ENCODE measurements at regions of chr5 and their contacts with region 1.

Region 1: GRCh38 chr5:39376293-39376714 is 12.0 kb upstream of the C9 start:
- DNase-seq: peak; percentile 94
- ATAC-seq: peak; percentile 77
- H3K4me3 ChIP-seq: no peak overlapping the region
- H3K27ac ChIP-seq: no peak overlapping the region
- H3K4me1 ChIP-seq: no peaks in the 10 kb centered on the region
- H3K27me3 ChIP-seq: no peaks in the 10 kb centered on the region
- CTCF ChIP-seq: peak; percentile 98

Region 2: DNA sequence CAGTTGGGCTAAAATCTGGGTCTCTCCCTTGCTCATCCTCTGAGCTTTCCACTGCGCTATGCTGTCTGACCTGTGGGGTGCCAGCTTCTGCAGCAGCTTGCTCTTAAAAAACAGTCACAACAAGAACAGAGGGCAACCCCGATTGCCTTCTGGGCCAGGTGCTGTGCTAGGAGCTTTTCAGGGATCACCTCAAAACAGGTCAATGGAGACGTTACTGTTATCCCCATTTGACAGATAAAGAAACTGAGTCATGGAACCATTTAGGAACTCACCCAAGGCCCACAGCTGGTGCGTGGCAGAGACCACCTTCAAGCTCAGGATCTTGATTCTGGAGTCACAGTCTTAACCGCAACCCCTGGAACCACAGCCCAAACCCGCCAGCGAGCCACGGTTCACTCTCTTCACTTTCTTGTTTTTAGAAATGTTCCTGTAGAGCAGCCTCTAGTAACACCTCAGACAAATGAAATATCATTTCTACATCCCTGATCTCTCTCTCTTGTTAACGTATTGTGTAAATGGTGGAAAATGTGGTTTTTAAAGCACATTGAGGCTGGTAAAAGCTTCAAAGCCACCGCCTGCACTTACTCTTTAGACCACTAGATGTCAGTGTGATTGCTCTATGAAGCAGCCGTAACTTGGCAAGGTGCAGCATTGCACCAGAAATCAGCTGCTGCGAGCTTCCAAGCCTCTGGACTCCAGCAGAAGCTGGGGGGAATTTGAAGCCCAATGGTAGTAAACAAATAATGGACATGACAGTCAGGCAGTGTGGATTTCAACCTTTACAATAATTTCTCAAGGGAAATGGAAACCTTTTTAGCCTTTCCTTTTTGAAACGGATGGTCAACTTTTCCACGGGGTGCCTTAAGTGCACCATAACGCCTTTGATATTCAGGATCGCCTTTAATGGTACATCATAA is 158.7 kb before region 1 on chr5:
- CTCF ChIA-PET with region 1: interaction called, 11 read pairs
- POLR2A ChIA-PET with region 1: no interaction called
- intact Hi-C with region 1: loop called (anchors 5 kb)
- DNase-seq: peak; percentile 95
- ATAC-seq: peak; percentile 39; the same call in 1 of the 2 replicates
- H3K4me3 ChIP-seq: no peak overlapping the region
- H3K27ac ChIP-seq: no peak overlapping the region
- H3K4me1 ChIP-seq: peaks cover 25% of the 10 kb centered on the region
- H3K27me3 ChIP-seq: no peaks in the 10 kb centered on the region
- CTCF ChIP-seq: peak; percentile 99

Region 3: GRCh38 chr5:39501397-39501796 is 125.1 kb after region 1 on chr5:
- CTCF ChIA-PET with region 1: interaction called, 12 read pairs
- POLR2A ChIA-PET with region 1: no interaction called
- intact Hi-C with region 1: no loop called
- DNase-seq: peak; percentile 81
- ATAC-seq: peak; percentile 92
- H3K4me3 ChIP-seq: peak overlapping the region; percentile 43; the same call in 1 of the 2 replicates
- H3K27ac ChIP-seq: peak overlapping the region; percentile 79
- H3K4me1 ChIP-seq: peaks cover 32% of the 10 kb centered on the region
- H3K27me3 ChIP-seq: no peaks in the 10 kb centered on the region
- CTCF ChIP-seq: no peak

Region 4: DNA sequence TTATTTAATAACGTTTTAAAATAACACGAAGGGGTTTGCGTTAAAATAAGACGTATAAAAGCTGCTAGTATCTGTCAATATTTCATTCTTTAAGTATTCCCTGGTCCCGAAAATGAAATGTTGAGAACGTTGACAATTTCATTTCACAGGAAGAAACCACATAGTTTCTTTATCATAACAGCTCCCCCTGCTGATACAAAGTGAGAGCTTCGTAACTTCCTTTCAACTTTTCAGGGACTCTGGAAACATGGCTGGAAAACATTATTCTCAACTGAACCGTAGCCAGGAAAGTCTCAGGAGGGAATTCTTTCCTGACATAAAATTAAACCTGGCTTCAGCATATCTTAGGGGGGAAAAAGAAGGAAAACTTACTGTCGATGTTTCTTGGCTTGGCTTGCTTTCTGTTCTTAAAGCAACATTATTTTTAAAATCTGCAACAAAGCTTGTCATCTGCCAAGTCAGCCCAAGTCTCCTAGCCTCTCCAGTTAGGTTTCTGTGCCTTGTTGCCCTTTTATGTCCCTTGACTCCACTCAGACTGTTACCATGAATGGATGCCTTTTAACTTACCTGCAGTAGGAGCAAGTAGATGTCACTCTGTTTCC is 171.3 kb after region 1 on chr5:
- CTCF ChIA-PET with region 1: interaction called, 54 read pairs
- POLR2A ChIA-PET with region 1: no interaction called
- intact Hi-C with region 1: loop called (anchors 1 kb)
- DNase-seq: peak; percentile 92
- ATAC-seq: peak; percentile 71
- H3K4me3 ChIP-seq: peak overlapping the region; percentile 25; the same call in 1 of the 2 replicates
- H3K27ac ChIP-seq: no peak overlapping the region
- H3K4me1 ChIP-seq: peaks cover 4% of the 10 kb centered on the region; the same call in 1 of the 2 replicates
- H3K27me3 ChIP-seq: no peaks in the 10 kb centered on the region
- CTCF ChIP-seq: peak; percentile 94

Measured in PC-3 (cell line).